ENCODE measurements at regions of chr15 and their contacts with region 1.

Region 1: GRCh38 chr15:70097337-70098169 is at the start of gene TLE3:
- DNase-seq: peak; percentile 98 to 99 (median 98)
- H3K4me3 ChIP-seq: peak within 1 kb of the TSS; percentile 84 to 99 (median 99)
- H3K4me3 Mint-ChIP-seq: peak within 1 kb of the TSS; percentile 98 to 99
- H3K27ac ChIP-seq: peak within 1 kb of the TSS; percentile 78 to 89
- H3K27ac Mint-ChIP-seq: peak within 1 kb of the TSS; percentile 96 to 99 (median 98)
- H3K4me1 ChIP-seq: peaks cover 65 to 81% of the 10 kb centered on the region in 2 donors
- H3K4me1 Mint-ChIP-seq: peaks cover 54% of the 10 kb centered on the region
- H3K27me3 ChIP-seq: peaks cover 13 to 27% of the 10 kb centered on the region in 2 donors
- H3K27me3 Mint-ChIP-seq: peaks cover 21 to 42% (median 31%) of the 10 kb centered on the region in 3 donors
- CTCF ChIP-seq: peak; percentile 37
- polyA plus RNA-seq, gene TLE3: 12.8 to 117 (median 23.6) TPM

Region 2: GRCh38 chr15:69475769-69476358 is 621.7 kb before region 1 on chr15:
- intact Hi-C with region 1: loop called in 1 of 2 experiments (anchors 10 kb)
- DNase-seq: peak; percentile 63 to 74 (median 66)
- H3K4me3 ChIP-seq: no peak overlapping the region
- H3K4me3 Mint-ChIP-seq: no peak overlapping the region
- H3K27ac ChIP-seq: no peak overlapping the region
- H3K27ac Mint-ChIP-seq: no peak overlapping the region
- H3K4me1 ChIP-seq: no peaks in the 10 kb centered on the region
- H3K4me1 Mint-ChIP-seq: peaks cover 4% of the 10 kb centered on the region
- H3K27me3 ChIP-seq: no peaks in the 10 kb centered on the region
- H3K27me3 Mint-ChIP-seq: peaks cover 4 to 7% (median 5%) of the 10 kb centered on the region in 3 donors
- CTCF ChIP-seq: peak; percentile 97

Region 3: DNA sequence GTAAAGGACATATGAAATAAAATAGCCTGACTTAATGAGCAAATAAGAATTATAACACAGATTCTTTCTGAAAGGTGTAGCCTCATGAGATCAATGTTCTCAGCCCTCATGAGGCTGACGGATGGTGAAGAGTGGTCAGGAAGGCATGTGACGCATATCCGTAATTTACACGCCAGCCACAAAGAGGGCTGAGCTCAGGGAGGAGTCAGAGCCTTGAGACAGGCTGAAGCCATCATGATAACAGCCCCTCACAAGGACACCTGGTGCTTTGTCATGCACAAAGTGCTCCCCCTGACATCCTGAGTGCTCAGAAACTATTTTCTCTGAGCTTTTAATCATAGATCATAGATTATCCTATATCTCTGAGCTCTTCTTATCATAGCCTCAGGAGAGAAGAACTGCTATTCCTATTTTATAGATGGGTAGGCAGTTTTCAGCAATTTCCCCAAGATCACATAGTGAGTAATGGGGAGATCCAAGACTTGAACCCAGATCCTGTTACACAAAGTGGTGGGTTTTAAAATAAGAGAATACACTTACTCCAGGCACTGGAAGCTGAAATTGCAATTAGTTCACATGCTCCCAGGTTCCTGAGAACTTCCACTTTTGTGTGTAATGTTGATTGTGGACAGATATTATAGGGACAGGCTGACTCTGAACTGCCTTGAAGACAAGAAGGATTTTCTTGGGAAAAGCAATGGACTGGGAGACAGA is 377.9 kb before region 1 on chr15:
- intact Hi-C with region 1: loop called in 1 of 2 experiments (anchors 5 kb)
- DNase-seq: peak; percentile 92 to 96 (median 93)
- H3K4me3 ChIP-seq: no peak overlapping the region
- H3K4me3 Mint-ChIP-seq: no peak overlapping the region
- H3K27ac ChIP-seq: peak overlapping the region; percentile 95
- H3K27ac Mint-ChIP-seq: peak overlapping the region; percentile 99 to 100 (median 100)
- H3K4me1 ChIP-seq: peaks cover 87 to 97% of the 10 kb centered on the region in 2 donors
- H3K4me1 Mint-ChIP-seq: peaks cover 93% of the 10 kb centered on the region
- H3K27me3 ChIP-seq: no peaks in the 10 kb centered on the region
- H3K27me3 Mint-ChIP-seq: peaks cover 0 to 4% (median 2%) of the 10 kb centered on the region in 3 donors
- CTCF ChIP-seq: no peak

Region 4: DNA sequence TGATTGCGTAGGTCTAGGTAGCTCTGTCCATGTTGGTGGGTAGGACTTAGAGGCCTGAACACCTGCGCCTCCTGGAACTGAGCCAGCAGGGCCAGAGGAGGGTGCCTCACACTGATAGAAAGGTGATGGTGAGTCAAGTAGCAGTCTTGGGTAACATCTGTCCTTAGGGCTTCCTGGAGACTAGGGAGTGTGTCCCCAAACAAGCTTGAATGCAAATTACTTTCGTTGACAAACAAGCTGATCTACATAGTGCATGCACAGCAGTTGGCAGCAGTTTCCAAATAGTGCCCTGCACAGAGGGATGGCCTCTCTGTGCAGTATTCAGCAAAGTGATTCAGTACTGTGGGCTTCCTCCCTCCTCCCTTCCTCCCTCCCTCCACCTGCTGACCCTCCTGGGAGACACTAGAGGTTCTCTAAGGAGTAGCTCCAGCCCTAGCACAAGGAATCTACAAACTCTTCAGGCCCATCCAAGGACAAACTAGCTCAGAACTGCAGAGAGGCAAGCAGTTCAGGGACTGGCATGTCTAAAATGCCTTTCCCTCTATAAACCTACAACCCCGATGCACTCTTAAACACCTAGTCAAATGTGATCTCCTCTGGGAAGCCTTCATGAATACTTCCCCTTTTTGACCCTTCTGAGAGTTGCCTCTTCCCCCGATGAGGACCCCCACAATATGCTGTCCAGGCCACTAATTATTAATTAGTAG is 60.8 kb before region 1 on chr15:
- intact Hi-C with region 1: no loop called
- DNase-seq: no peak
- H3K4me3 ChIP-seq: no peak overlapping the region
- H3K4me3 Mint-ChIP-seq: no peak overlapping the region
- H3K27ac ChIP-seq: no peak overlapping the region
- H3K27ac Mint-ChIP-seq: peak overlapping the region in 4 of 7 donors; percentile 2 to 37 (median 18)
- H3K4me1 ChIP-seq: peaks cover 19 to 20% of the 10 kb centered on the region in 2 donors
- H3K4me1 Mint-ChIP-seq: peaks cover 22% of the 10 kb centered on the region
- H3K27me3 ChIP-seq: no peaks in the 10 kb centered on the region
- H3K27me3 Mint-ChIP-seq: peaks cover 0 to 4% (median 0%) of the 10 kb centered on the region in 3 donors
- CTCF ChIP-seq: no peak

Region 5: DNA sequence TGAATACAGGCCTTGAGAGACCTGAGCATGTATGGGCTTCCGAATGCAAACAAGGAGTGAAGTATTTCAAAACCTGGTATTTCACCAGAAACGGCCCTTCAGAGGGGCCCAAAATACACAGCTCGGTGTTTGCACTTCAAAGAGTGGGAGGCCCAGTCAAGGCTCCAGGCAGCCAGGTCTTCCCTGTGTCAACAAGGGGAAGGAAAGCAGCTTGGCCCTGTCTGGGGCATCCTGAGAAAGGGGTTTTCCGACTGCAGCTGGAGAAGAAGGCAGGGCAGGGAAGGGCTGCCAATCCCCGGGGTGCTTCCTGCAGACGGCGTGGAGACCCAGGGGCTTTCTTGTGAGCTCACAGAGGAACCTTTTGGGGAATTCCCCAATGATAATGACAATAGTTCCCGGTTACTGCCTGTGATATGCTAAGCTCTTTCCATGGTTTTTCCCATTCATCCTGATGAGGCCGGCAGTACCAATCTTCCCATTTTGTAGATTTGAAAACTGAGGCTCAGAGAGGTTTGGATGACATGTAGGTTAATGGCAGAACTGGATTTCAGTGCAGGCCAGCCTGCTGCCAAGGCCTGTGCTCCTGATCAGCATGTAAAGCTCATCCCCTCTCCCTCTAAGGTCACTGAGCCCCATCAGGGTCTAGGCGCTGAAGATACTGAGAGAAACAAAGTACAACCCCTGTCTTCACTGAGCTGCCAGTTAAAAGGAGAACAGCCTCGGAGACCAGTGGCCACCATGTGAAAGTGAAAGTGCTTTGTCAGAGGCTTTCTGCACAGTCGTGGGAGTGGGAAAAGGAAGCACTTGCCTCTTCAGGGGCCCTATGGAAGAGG is 43.2 kb after region 1 on chr15:
- intact Hi-C with region 1: loop called (anchors 1 to 2 kb)
- DNase-seq: peak; percentile 87 to 98 (median 88)
- H3K4me3 ChIP-seq: peak overlapping the region in 1 of 3 experiments; percentile 36
- H3K4me3 Mint-ChIP-seq: peak overlapping the region; percentile 63 to 82
- H3K27ac ChIP-seq: peak overlapping the region; percentile 75 to 89
- H3K27ac Mint-ChIP-seq: peak overlapping the region; percentile 94 to 98 (median 97)
- H3K4me1 ChIP-seq: peaks cover 36 to 39% of the 10 kb centered on the region in 2 donors
- H3K4me1 Mint-ChIP-seq: peaks cover 49% of the 10 kb centered on the region
- H3K27me3 ChIP-seq: no peaks in the 10 kb centered on the region
- H3K27me3 Mint-ChIP-seq: peaks cover 16 to 28% (median 17%) of the 10 kb centered on the region in 3 donors
- CTCF ChIP-seq: no peak

Region 6: DNA sequence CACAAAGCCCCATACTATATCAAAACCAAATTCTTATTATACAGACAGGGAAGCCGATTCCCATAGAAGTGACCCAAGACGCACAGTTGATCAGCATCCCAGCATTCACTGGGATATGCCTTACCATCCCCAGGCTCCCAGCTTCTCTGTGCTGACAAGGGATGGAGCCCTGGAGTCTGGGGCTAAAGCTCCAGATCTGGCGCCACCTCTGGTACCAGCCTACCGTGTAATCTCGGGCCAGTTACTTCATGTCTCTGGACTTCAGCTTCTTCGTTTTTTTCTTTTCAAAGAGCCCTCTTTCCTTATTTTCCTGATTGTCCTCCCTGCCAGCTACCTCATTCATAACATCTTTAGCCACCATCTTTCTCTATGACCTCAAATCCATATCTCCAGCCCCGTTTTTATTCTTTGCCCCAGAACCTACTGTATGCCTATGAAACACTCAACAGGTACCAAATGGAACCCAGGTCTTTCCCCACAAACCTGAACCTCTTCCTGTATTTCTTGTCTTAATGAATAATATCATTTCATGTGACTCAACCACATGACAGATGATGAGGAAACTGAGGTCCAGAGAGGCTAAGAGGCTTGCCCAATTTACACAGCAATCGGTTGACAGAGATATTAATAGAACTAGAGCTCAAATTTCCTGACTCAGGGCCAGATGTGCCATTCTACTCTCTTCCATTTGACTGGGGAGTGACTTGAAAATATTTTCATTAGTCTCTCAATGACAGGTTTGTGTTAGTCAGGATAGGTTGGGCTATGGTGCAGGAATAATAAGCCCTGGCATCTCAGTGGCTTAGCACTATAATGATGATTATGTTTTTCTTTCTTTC is 85.5 kb after region 1 on chr15:
- intact Hi-C with region 1: loop called in 1 of 2 experiments (anchors 5 kb)
- DNase-seq: peak; percentile 46 to 76 (median 56)
- H3K4me3 ChIP-seq: no peak overlapping the region
- H3K4me3 Mint-ChIP-seq: no peak overlapping the region
- H3K27ac ChIP-seq: no peak overlapping the region
- H3K27ac Mint-ChIP-seq: peak overlapping the region in 1 of 7 donors; percentile 64
- H3K4me1 ChIP-seq: peaks cover 4 to 11% of the 10 kb centered on the region in 2 donors
- H3K4me1 Mint-ChIP-seq: peaks cover 7% of the 10 kb centered on the region
- H3K27me3 ChIP-seq: no peaks in the 10 kb centered on the region
- H3K27me3 Mint-ChIP-seq: peaks cover 3 to 11% (median 8%) of the 10 kb centered on the region in 3 donors
- CTCF ChIP-seq: no peak

Region 7: GRCh38 chr15:70271422-70272088 is 174.0 kb after region 1 on chr15:
- intact Hi-C with region 1: loop called in 1 of 2 experiments (anchors 2 kb)
- DNase-seq: peak; percentile 89 to 97 (median 97)
- H3K4me3 ChIP-seq: no peak overlapping the region
- H3K4me3 Mint-ChIP-seq: peak overlapping the region; percentile 9 to 64
- H3K27ac ChIP-seq: peak overlapping the region in 1 of 2 donors; percentile 62
- H3K27ac Mint-ChIP-seq: peak overlapping the region; percentile 46 to 88 (median 86)
- H3K4me1 ChIP-seq: peaks cover 52 to 56% of the 10 kb centered on the region in 2 donors
- H3K4me1 Mint-ChIP-seq: peaks cover 56% of the 10 kb centered on the region
- H3K27me3 ChIP-seq: peaks cover 0 to 3% of the 10 kb centered on the region in 2 donors
- H3K27me3 Mint-ChIP-seq: peaks cover 11 to 13% (median 11%) of the 10 kb centered on the region in 3 donors
- CTCF ChIP-seq: no peak

Region 8: DNA sequence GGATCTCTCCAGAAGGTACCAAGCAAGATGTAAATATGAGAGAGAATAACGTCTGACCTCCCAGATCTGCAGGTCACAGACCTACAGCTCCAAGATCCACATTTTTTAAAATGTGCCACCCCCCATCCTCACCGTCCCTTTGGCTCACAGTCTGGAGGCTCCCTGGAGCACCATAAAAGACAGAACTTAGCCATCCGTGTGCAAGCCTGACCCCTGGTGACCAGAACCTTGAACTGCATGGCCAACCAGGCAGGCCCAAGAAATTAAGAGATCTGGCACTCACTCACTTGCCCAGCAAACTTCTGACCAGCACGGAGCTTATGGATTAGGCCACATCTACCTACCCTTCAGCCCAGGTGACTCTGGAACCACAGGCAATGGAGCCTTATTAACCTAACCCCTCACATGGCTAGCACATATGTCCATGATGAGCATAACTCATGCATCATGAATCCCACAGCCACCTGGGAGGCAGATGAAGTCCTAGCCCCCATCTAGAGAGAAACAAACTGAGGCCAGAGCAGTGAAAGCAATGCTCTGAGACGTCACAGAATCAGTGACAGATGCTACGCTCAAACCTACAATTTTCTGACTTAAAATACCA is 390.6 kb after region 1 on chr15:
- intact Hi-C with region 1: loop called in 1 of 2 experiments (anchors 2 kb)
- DNase-seq: peak; percentile 80 to 84 (median 82)
- H3K4me3 ChIP-seq: no peak overlapping the region
- H3K4me3 Mint-ChIP-seq: peak overlapping the region in 1 of 2 donors; percentile 53
- H3K27ac ChIP-seq: peak overlapping the region; percentile 93 to 96
- H3K27ac Mint-ChIP-seq: peak overlapping the region; percentile 97 to 100 (median 99)
- H3K4me1 ChIP-seq: peaks cover 87 to 96% of the 10 kb centered on the region in 2 donors
- H3K4me1 Mint-ChIP-seq: peaks cover 92% of the 10 kb centered on the region
- H3K27me3 ChIP-seq: no peaks in the 10 kb centered on the region
- H3K27me3 Mint-ChIP-seq: peaks cover 9 to 21% (median 11%) of the 10 kb centered on the region in 3 donors
- CTCF ChIP-seq: peak; percentile 94